ENCODE measurements at regions of chr4 and their contacts with region 1.

Region 1: DNA sequence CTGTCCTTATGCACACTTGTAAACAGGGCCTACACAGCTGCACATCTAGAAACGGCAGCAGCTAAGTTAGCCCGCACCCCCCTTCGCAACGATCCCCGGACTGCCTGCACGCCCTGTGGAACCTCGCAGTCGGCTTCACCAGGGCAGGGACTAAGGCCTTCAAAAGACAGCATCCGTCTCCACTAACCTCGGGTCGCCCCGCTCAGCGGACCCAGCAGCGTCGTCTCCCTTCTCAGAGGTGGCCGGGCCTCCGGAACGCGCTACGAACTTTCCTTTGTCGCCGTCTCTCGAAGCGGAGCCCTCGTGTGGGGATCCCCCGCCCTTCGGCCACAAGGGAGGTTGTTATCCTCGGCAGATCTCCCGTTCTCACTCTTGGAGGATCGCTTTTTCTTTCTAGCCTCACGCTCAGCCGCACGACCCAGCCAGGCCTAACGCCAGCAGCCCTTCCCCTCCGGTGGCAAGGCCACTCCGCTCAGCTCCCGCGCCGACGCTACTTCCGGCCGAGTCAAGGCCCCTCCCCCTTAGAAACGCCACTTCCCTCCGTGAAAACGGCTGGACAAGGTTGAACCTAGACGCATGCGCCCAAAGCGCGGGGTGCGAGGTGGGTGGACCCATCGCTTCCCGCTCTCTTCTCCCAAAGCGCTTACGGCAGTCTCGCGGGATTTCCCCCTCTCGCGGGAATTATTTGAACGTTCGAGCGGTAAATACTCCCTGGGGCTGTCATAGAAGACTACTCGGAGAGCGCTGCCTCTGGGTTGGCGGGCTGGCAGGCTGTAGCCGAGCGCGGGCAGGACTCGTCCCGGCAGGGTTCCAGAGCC is at the starts of genes DCAF16 and NCAPG:
- DNase-seq: peak; percentile 99
- H3K4me3 Mint-ChIP-seq: peak within 1 kb of the TSS; percentile 97
- H3K27ac Mint-ChIP-seq: peak within 1 kb of the TSS; percentile 95
- H3K4me1 Mint-ChIP-seq: peaks cover 76% of the 10 kb centered on the region
- H3K27me3 Mint-ChIP-seq: no peaks in the 10 kb centered on the region
- total RNA-seq, gene DCAF16: 44.0 and 48.5 TPM in 2 replicates
- total RNA-seq, gene NCAPG: 43.7 and 46.3 TPM in 2 replicates

Region 2: DNA sequence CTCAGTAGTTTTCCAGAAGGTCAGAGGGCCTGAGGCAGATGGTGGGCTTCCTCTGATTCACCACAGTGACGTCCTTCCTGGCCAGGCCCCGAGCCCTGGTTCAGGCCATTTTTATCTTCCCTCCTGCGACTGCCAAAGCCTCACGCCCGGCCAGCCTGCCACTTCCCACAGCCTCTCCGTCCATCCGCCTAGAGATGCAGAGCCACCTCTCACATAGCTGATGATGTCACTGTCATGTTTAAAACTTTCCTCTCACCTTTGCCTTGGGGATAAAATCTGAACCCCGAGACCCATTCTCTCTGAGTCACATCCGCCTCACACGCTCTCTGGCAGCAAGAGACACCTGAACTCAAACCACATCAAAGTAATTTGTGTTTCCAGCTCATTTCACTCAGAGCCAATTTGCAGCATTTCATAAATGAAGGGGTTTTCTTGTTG is 473.9 kb before region 1 on chr4:
- intact Hi-C with region 1: loop called (anchors 5 kb)
- DNase-seq: peak; percentile 77
- H3K4me3 Mint-ChIP-seq: peak overlapping the region; percentile 47
- H3K27ac Mint-ChIP-seq: peak overlapping the region; percentile 87
- H3K4me1 Mint-ChIP-seq: peaks cover 43% of the 10 kb centered on the region
- H3K27me3 Mint-ChIP-seq: peaks cover 6% of the 10 kb centered on the region

Region 3: GRCh38 chr4:17544205-17544604 is 266.3 kb before region 1 on chr4:
- intact Hi-C with region 1: loop called (anchors 1 kb)
- DNase-seq: no peak
- H3K4me3 Mint-ChIP-seq: no peak overlapping the region
- H3K27ac Mint-ChIP-seq: no peak overlapping the region
- H3K4me1 Mint-ChIP-seq: peaks cover 6% of the 10 kb centered on the region
- H3K27me3 Mint-ChIP-seq: peaks cover 10% of the 10 kb centered on the region

Region 4: DNA sequence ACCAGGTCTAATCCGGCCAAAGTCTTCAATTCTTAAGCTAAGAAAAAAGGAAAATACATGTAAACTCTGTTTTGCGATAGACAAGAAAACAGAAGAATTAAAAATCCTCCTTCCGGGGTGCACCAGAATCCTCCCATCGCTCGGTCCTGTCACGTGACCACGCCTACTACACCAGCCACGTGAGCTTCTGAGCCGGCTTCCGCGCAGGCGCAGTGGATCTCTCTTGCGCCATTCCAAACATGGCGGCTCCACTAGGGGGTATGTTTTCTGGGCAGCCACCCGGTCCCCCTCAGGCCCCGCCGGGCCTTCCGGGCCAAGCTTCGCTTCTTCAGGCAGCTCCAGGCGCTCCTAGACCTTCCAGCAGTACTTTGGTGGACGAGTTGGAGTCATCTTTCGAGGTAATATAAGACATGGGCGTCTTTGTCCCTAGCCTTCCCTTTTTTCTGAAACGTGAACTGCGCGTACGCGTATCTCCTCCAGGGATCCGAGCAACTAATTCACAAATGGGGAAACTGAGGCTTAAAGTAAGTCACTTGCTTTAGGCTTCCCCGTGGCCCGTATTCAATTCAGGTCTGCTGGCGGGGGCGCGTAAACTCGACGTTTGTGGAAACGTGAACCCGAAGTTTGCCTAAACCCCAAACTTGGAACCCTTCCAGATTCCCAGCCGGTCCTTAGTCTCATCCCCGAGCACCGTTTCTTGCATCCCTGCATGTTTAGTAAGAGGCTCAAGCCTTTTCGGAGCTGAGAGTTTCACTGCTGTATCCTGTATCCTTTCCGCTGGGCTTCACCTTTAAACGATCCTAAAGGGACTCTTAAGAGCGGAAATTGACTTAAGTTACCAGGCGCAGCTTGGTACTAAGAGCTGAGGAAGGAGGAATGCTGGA is 195.8 kb before region 1 on chr4 and contains the start of gene MED28:
- intact Hi-C with region 1: loop called (anchors 1 kb)
- DNase-seq: peak; percentile 93
- H3K4me3 Mint-ChIP-seq: peak within 1 kb of the TSS; percentile 96
- H3K27ac Mint-ChIP-seq: peak within 1 kb of the TSS; percentile 97
- H3K4me1 Mint-ChIP-seq: peaks cover 32% of the 10 kb centered on the region
- H3K27me3 Mint-ChIP-seq: peaks cover 2% of the 10 kb centered on the region
- total RNA-seq, gene MED28: 46.6 and 49.6 TPM in 2 replicates

Region 5: DNA sequence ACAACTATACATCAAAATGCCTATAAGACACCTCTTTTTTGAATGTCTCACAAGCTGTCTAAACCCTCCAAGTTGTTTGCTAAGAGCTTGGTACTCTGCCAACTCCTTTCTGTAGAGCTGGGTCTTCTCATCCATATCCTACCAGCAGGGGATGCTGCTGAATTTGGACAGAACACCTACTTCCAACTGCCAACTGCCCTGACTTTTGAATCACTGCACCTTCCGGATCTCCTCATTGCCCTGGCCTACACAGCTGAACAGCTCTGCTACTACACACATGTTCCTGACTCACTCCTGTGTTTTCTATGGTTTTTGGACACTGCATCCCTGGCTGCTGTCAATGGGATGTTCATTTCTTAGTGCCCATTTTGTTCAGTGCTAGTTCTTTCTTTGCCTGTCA is 47.7 kb before region 1 on chr4:
- intact Hi-C with region 1: loop called (anchors 2 kb)
- DNase-seq: no peak
- H3K4me3 Mint-ChIP-seq: no peak overlapping the region
- H3K27ac Mint-ChIP-seq: no peak overlapping the region
- H3K4me1 Mint-ChIP-seq: peaks cover 4% of the 10 kb centered on the region
- H3K27me3 Mint-ChIP-seq: peaks cover 2% of the 10 kb centered on the region

Region 6: DNA sequence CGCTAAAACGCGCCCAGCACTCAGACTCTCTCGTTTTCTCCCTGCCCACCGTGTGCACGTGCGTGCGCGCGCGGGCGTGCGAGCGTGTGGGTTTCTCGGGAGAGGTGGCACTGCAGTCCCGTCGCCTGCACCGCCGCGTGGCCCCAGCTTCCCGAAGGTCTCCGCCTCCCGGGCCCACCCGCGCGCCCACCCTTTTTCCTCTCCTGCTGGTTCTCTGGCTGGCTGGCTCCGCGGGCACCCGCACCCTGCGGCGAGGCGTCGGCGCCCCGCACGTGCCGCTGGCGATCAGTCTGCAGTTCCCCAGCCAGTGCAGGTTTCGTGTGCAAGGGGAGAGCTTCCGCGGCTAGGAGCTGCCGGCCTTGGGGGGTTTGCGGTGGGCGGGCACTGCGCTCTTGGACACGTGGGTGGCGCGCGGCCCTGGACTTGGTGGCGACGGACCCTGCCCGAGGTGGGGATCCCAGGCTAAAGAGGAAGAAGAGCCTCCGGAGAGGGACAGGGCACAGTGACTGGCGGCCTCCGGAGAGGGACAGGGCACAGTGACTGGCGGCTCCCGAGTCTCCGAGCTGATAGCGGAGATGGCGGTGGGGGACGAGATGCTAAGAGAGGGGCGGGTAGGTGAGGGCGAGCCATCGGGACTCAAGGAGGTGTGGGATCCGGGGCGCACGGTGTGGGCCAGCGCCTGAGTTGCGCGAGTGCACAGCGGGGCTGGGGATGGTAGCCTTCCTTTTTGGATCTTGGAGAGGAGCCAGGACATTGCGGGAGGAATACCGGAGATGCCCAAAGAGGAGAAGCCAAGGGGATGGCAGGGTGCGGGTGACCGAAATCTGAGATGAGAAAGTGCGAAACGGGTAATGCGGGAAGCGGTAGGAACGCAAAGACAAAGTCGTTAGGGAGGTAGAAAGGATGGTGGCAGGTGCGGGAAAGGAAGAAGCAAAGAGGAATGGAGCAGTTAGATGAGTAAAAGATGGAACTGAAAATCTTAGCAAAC is 28.9 kb before region 1 on chr4 and contains the start of gene FAM184B:
- intact Hi-C with region 1: no loop called
- DNase-seq: no peak
- H3K4me3 Mint-ChIP-seq: peak within 1 kb of the TSS; percentile 30
- H3K27ac Mint-ChIP-seq: no peak within 1 kb of the TSS
- H3K4me1 Mint-ChIP-seq: no peaks in the 10 kb centered on the region
- H3K27me3 Mint-ChIP-seq: peaks cover 49% of the 10 kb centered on the region
- total RNA-seq, gene FAM184B: not detected in 2 replicates

Region 7: DNA sequence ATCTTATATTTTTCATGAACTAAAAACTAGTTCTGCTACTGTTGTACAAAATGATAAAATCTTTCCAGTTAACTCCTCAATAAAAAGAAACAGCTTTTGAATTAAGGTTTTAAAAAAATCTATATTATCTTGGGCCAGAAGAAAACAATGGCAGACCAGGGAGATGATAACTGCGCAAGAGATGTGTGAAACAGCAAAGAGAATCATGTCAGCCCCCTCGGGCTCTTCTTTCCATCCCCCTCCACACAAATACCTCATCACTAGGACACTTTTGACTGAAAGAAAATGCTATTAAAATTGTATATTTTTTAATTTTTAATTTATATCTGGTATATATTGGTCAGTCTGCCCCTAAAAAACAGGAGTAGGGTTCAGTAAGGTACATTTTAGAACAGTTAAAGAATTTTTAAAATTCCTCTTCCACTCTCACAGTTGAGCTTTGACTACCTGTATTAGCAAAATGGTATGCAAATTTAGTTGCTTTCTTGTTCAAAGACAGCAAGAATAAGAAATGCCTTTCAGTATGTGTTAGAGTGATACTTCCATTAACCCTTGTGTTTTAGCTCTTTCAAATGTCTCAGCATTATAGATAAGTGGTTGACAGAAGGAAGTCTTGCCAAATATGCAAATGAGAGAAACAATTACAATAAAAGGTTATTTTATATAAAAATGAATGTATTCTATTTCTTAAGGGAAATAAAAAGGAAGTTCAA is 247.5 kb after region 1 on chr4:
- intact Hi-C with region 1: loop called (anchors 2 kb)
- DNase-seq: no peak
- H3K4me3 Mint-ChIP-seq: peak overlapping the region; percentile 2
- H3K27ac Mint-ChIP-seq: no peak overlapping the region
- H3K4me1 Mint-ChIP-seq: peaks cover 19% of the 10 kb centered on the region
- H3K27me3 Mint-ChIP-seq: peaks cover 38% of the 10 kb centered on the region

Measured in activated T-helper 1 cell treated with anti-CD3 and anti-CD28 coated beads, Interleukin-12 subunit alpha, Interleukin-12 subunit beta, Interleukin-2, Interleukin-4 antibody, amounts not matched to agents 30 ng/mL and 10 ng/mL and 1 ng/mL, durations not matched to agents 14 hours and 24 hours and 36 hours (primary cell).